Heart left ventricle (tissue), 16 donors: ENCODE measurements at regions of chr5 and their contacts with region 1.

Region 1: GRCh38 chr5:81856948-81857928 is 106.3 kb upstream of the SSBP2 start:
- DNase-seq: peak; percentile 86 to 94 (median 88)
- ATAC-seq: peak; percentile 95 to 96 (median 96)
- H3K4me3 ChIP-seq: peak overlapping the region in 6 of 12 donors; percentile 9 to 37 (median 24)
- H3K27ac ChIP-seq: peak overlapping the region; percentile 64 to 90 (median 74)
- H3K4me1 ChIP-seq: peaks cover 0 to 55% (median 22%) of the 10 kb centered on the region in 12 donors
- H3K27me3 ChIP-seq: no peaks in the 10 kb centered on the region
- CTCF ChIP-seq: peak in 10 of 12 donors; percentile 4 to 48 (median 23)
- POLR2A ChIP-seq: no peak

Region 2: GRCh38 chr5:81513982-81514381 is 343.3 kb before region 1 on chr5:
- intact Hi-C with region 1: loop called in 7 of 10 experiments (anchors 2 to 10 kb)
- DNase-seq: no peak
- ATAC-seq: no peak
- H3K4me3 ChIP-seq: no peak overlapping the region
- H3K27ac ChIP-seq: no peak overlapping the region
- H3K4me1 ChIP-seq: no peaks in the 10 kb centered on the region
- H3K27me3 ChIP-seq: no peaks in the 10 kb centered on the region
- CTCF ChIP-seq: peak in 7 of 12 donors; percentile 13 to 37 (median 22)
- POLR2A ChIP-seq: no peak